Activated B cell treated with CpG ODN at 0.5 μM for 24 hours (primary cell): ENCODE measurements at regions of chr13 and their contacts with region 1.

Region 1: GRCh38 chr13:48975856-48976575 is at the start of gene FNDC3A:
- DNase-seq: peak; percentile 82
- ATAC-seq: peak; percentile 77
- H3K4me3 Mint-ChIP-seq: peak within 1 kb of the TSS; percentile 95
- H3K27ac Mint-ChIP-seq: peak within 1 kb of the TSS; percentile 98
- H3K4me1 Mint-ChIP-seq: peaks cover 47% of the 10 kb centered on the region
- H3K27me3 Mint-ChIP-seq: no peaks in the 10 kb centered on the region
- CTCF ChIP-seq: no peak
- total RNA-seq, gene FNDC3A: 30.3 and 34.1 TPM in 2 replicates

Region 2: GRCh38 chr13:48094781-48095502 is 881.1 kb before region 1 on chr13 and contains the start of gene MED4:
- CTCF ChIA-PET with region 1: no interaction called
- POLR2A ChIA-PET with region 1: interaction called, 5 read pairs
- intact Hi-C with region 1: loop called (anchors 2 kb)
- DNase-seq: peak; percentile 99
- ATAC-seq: peak; percentile 99
- H3K4me3 Mint-ChIP-seq: peak within 1 kb of the TSS; percentile 96
- H3K27ac Mint-ChIP-seq: peak within 1 kb of the TSS; percentile 90
- H3K4me1 Mint-ChIP-seq: peaks cover 34% of the 10 kb centered on the region
- H3K27me3 Mint-ChIP-seq: peaks cover 5% of the 10 kb centered on the region
- CTCF ChIP-seq: peak; percentile 84
- total RNA-seq, gene MED4: 50.4 and 51.9 TPM in 2 replicates

Region 3: GRCh38 chr13:48542581-48543341 is 433.3 kb before region 1 on chr13:
- CTCF ChIA-PET with region 1: no interaction called
- POLR2A ChIA-PET with region 1: no interaction called
- intact Hi-C with region 1: no loop called
- DNase-seq: no peak
- ATAC-seq: no peak
- H3K4me3 Mint-ChIP-seq: no peak overlapping the region
- H3K27ac Mint-ChIP-seq: no peak overlapping the region
- H3K4me1 Mint-ChIP-seq: no peaks in the 10 kb centered on the region
- H3K27me3 Mint-ChIP-seq: peaks cover 63% of the 10 kb centered on the region
- CTCF ChIP-seq: no peak

Region 4: GRCh38 chr13:48873587-48873986 is 102.4 kb before region 1 on chr13:
- CTCF ChIA-PET with region 1: no interaction called
- POLR2A ChIA-PET with region 1: no interaction called
- intact Hi-C with region 1: no loop called
- DNase-seq: no peak
- ATAC-seq: no peak
- H3K4me3 Mint-ChIP-seq: no peak overlapping the region
- H3K27ac Mint-ChIP-seq: no peak overlapping the region
- H3K4me1 Mint-ChIP-seq: no peaks in the 10 kb centered on the region
- H3K27me3 Mint-ChIP-seq: peaks cover 6% of the 10 kb centered on the region
- CTCF ChIP-seq: no peak

Region 5: GRCh38 chr13:48994706-48995105 is 18.7 kb after region 1 on chr13:
- CTCF ChIA-PET with region 1: no interaction called
- POLR2A ChIA-PET with region 1: no interaction called
- intact Hi-C with region 1: loop called (anchors 2 kb)
- DNase-seq: no peak
- ATAC-seq: no peak
- H3K4me3 Mint-ChIP-seq: no peak overlapping the region
- H3K27ac Mint-ChIP-seq: no peak overlapping the region
- H3K4me1 Mint-ChIP-seq: peaks cover 12% of the 10 kb centered on the region
- H3K27me3 Mint-ChIP-seq: no peaks in the 10 kb centered on the region
- CTCF ChIP-seq: no peak

Region 6: GRCh38 chr13:49247643-49248621 is 271.9 kb after region 1 on chr13 and contains the start of gene CDADC1:
- CTCF ChIA-PET with region 1: no interaction called
- POLR2A ChIA-PET with region 1: no interaction called
- intact Hi-C with region 1: loop called (anchors 2 kb)
- DNase-seq: peak; percentile 89
- ATAC-seq: peak; percentile 95
- H3K4me3 Mint-ChIP-seq: peak within 1 kb of the TSS; percentile 99
- H3K27ac Mint-ChIP-seq: peak within 1 kb of the TSS; percentile 94
- H3K4me1 Mint-ChIP-seq: peaks cover 22% of the 10 kb centered on the region
- H3K27me3 Mint-ChIP-seq: no peaks in the 10 kb centered on the region
- CTCF ChIP-seq: no peak
- total RNA-seq, gene CDADC1: 7.4 and 10.4 TPM in 2 replicates

Region 7: GRCh38 chr13:49641801-49642291 is 665.8 kb after region 1 on chr13:
- CTCF ChIA-PET with region 1: no interaction called
- POLR2A ChIA-PET with region 1: no interaction called
- intact Hi-C with region 1: no loop called
- DNase-seq: no peak
- ATAC-seq: no peak
- H3K4me3 Mint-ChIP-seq: peak overlapping the region; percentile 24
- H3K27ac Mint-ChIP-seq: no peak overlapping the region
- H3K4me1 Mint-ChIP-seq: peaks cover 34% of the 10 kb centered on the region
- H3K27me3 Mint-ChIP-seq: no peaks in the 10 kb centered on the region
- CTCF ChIP-seq: no peak

Region 8: GRCh38 chr13:49792550-49793324 is 816.7 kb after region 1 on chr13 and contains the start of gene KPNA3:
- CTCF ChIA-PET with region 1: no interaction called
- POLR2A ChIA-PET with region 1: no interaction called
- intact Hi-C with region 1: loop called (anchors 5 kb)
- DNase-seq: peak; percentile 88
- ATAC-seq: peak; percentile 89
- H3K4me3 Mint-ChIP-seq: peak within 1 kb of the TSS; percentile 97
- H3K27ac Mint-ChIP-seq: peak within 1 kb of the TSS; percentile 97
- H3K4me1 Mint-ChIP-seq: peaks cover 31% of the 10 kb centered on the region
- H3K27me3 Mint-ChIP-seq: no peaks in the 10 kb centered on the region
- CTCF ChIP-seq: no peak
- total RNA-seq, gene KPNA3: 28.6 and 28.7 TPM in 2 replicates

Region 9: GRCh38 chr13:50365408-50366391 is 1389.7 kb after region 1 on chr13:
- CTCF ChIA-PET with region 1: no interaction called
- POLR2A ChIA-PET with region 1: no interaction called
- intact Hi-C with region 1: loop called (anchors 5 kb)
- DNase-seq: no peak
- ATAC-seq: peak; percentile 28
- H3K4me3 Mint-ChIP-seq: peak overlapping the region; percentile 63
- H3K27ac Mint-ChIP-seq: peak overlapping the region; percentile 86
- H3K4me1 Mint-ChIP-seq: peaks cover 57% of the 10 kb centered on the region
- H3K27me3 Mint-ChIP-seq: no peaks in the 10 kb centered on the region
- CTCF ChIP-seq: no peak

Region 10: GRCh38 chr13:50676602-50677001 is 1700.6 kb after region 1 on chr13:
- CTCF ChIA-PET with region 1: no interaction called
- POLR2A ChIA-PET with region 1: no interaction called
- intact Hi-C with region 1: no loop called
- DNase-seq: no peak
- ATAC-seq: peak; percentile 82
- H3K4me3 Mint-ChIP-seq: no peak overlapping the region
- H3K27ac Mint-ChIP-seq: peak overlapping the region; percentile 33
- H3K4me1 Mint-ChIP-seq: peaks cover 18% of the 10 kb centered on the region
- H3K27me3 Mint-ChIP-seq: no peaks in the 10 kb centered on the region
- CTCF ChIP-seq: no peak